GM10248 (cell line): ENCODE measurements at regions of chr17 and their contacts with region 1.

Region 1: GRCh38 chr17:40531051-40531991 is 29.9 kb upstream of the TNS4 start:
- DNase-seq: peak; percentile 51
- CTCF ChIP-seq: no peak

Region 2: DNA sequence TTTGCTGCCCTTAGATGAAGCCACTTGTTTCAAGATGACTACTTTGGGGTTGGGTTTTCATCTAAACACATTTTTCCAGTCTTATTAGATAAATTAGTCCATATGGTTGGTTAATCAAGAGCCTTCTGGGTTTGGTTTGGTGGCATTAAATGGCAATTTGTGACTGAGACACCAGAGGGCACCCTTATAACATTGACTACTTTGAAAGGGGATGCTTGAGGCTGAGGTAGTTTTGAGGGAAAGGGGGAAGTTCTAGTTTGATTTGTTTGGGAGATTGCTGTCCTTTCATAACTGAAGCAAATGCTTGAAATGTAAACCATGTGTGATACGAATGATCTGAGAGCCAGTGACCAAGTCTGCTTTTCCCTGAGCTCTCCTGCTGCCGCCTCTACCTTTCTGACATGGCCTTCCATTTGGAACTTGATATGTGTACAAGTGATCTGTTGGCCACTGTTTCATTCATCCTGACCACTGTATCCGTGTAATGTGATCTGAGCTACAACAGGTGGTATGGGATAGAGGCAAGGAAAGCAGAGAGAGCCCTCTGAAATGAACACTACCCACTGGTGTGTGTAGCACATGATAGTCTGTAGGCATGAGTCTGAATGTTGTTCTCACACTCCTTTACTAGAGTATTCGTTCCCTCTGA is 228.2 kb before region 1 on chr17:
- CTCF ChIA-PET with region 1: interaction called, 18 read pairs
- POLR2A ChIA-PET with region 1: no interaction called
- DNase-seq: no peak
- CTCF ChIP-seq: peak; percentile 66

Region 3: GRCh38 chr17:40387680-40388079 is 143.6 kb before region 1 on chr17:
- CTCF ChIA-PET with region 1: interaction called, 13 read pairs
- POLR2A ChIA-PET with region 1: no interaction called
- DNase-seq: no peak
- CTCF ChIP-seq: no peak

Region 4: DNA sequence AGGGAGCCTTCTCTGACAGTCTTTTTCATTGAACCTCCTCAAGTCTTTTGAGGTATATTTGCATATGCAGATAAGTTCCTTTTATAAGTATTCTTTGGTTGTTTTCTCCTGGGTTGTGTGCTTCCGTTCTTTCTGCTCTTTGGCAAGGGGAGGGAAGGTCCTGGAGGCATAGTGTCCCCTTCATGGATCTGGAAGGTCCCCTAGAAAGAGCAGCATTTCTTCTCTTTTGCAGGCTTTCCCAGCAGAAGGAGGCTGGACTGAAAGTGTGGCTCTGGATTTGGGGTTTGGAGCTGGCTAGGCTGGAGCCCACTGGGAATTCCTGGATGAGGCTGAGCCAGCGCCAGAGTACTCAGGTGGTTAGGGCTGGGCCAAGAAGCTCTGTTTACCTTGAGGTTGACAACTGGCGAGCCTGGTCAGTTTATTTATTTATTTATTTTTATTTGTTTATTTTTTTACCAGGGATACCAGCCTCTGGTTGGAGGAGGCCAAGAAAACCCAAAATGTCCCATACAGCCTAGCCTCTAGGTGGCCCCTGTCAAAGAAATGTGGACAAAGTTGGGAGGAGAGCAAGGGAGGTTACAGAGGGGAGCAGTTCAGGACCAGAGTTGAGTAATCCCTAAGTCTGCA is 108.2 kb before region 1 on chr17:
- CTCF ChIA-PET with region 1: interaction called, 53 read pairs
- POLR2A ChIA-PET with region 1: interaction called, 5 read pairs
- DNase-seq: no peak
- CTCF ChIP-seq: no peak

Region 5: GRCh38 chr17:40497690-40498089 is 33.6 kb before region 1 on chr17:
- CTCF ChIA-PET with region 1: interaction called, 16 read pairs
- POLR2A ChIA-PET with region 1: no interaction called
- DNase-seq: no peak
- CTCF ChIP-seq: no peak